GM12878 (cell line): ENCODE measurements at regions of chr2 and their contacts with region 1.

Region 1: DNA sequence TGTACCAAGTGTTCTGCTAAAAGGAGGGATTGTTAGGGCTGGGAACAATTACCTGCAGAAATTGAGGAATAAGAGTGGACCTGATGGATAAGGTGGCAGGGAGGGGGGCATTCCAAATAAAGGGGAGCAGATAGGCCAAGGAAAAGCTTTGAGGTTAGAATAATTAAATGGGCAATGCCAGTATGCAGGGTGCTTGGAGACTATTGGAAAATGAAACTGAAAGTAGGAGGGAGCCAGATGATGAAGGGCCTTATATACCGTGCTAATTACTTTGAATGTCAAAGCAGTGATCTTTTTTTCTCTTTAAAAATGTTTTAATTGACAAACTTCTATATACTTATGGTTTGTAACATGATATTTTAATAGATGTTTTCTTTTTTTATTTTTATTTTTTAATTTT is 42.9 kb downstream of the MMADHC start:
- DNase-seq: no peak
- ATAC-seq: no peak
- H3K4me3 ChIP-seq: no peak overlapping the region
- H3K27ac ChIP-seq: no peak overlapping the region
- H3K4me1 ChIP-seq: no peaks in the 10 kb centered on the region
- H3K27me3 ChIP-seq: no peaks in the 10 kb centered on the region; a peak in 1 of 4 replicates
- CTCF ChIP-seq: no peak
- EP300 ChIP-seq: no peak
- POLR2A ChIP-seq: no peak
- RAD21 ChIP-seq: no peak

Region 2: DNA sequence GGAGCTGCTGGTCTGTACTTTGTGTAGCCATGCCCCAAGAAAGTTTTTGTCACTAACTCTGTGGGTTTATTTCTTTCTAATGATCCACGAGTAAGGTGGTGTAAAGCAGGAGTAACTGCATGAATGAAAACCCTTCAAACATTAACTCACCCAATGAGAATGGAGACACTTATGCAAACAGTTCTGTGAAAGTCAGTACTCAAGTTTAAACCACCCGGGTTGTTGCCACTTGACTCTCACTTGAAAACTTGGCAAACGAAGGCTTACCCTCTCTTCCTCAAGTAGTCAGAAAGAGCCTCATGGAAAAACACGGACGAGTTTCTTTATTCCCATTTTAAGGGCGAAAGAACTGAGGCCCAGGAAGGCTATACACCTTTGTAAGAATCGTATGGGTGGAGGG is 74.6 kb before region 1 on chr2:
- CTCF ChIA-PET with region 1: no interaction called
- POLR2A ChIA-PET with region 1: no interaction called
- RAD21 ChIA-PET with region 1: no interaction called
- SMC1A ChIA-PET with region 1: no interaction called
- in situ Hi-C with region 1: no loop called
- intact Hi-C with region 1: no loop called
- DNase-seq: no peak
- ATAC-seq: no peak
- H3K4me3 ChIP-seq: no peak overlapping the region
- H3K27ac ChIP-seq: no peak overlapping the region
- H3K4me1 ChIP-seq: no peaks in the 10 kb centered on the region
- H3K27me3 ChIP-seq: no peaks in the 10 kb centered on the region
- CTCF ChIP-seq: no peak
- EP300 ChIP-seq: no peak
- POLR2A ChIP-seq: no peak
- RAD21 ChIP-seq: no peak

Region 3: GRCh38 chr2:149490296-149490695 is 54.4 kb before region 1 on chr2:
- CTCF ChIA-PET with region 1: no interaction called
- POLR2A ChIA-PET with region 1: interaction called, 11 read pairs
- RAD21 ChIA-PET with region 1: no interaction called
- SMC1A ChIA-PET with region 1: no interaction called
- in situ Hi-C with region 1: no loop called
- intact Hi-C with region 1: no loop called
- DNase-seq: no peak
- ATAC-seq: no peak
- H3K4me3 ChIP-seq: no peak overlapping the region
- H3K27ac ChIP-seq: no peak overlapping the region
- H3K4me1 ChIP-seq: no peaks in the 10 kb centered on the region
- H3K27me3 ChIP-seq: peaks cover 0 to 4% of the 10 kb centered on the region in 2 experiments; a peak in 1 of 4 replicates
- CTCF ChIP-seq: no peak
- EP300 ChIP-seq: no peak
- POLR2A ChIP-seq: no peak
- RAD21 ChIP-seq: no peak

Region 4: GRCh38 chr2:149572102-149572953 is 27.6 kb after region 1 on chr2:
- CTCF ChIA-PET with region 1: no interaction called
- POLR2A ChIA-PET with region 1: no interaction called
- RAD21 ChIA-PET with region 1: no interaction called
- SMC1A ChIA-PET with region 1: no interaction called
- in situ Hi-C with region 1: no loop called
- intact Hi-C with region 1: no loop called
- DNase-seq: no peak
- ATAC-seq: no peak; the same call in 2 of the 3 replicates
- H3K4me3 ChIP-seq: no peak overlapping the region
- H3K27ac ChIP-seq: no peak overlapping the region
- H3K4me1 ChIP-seq: no peaks in the 10 kb centered on the region
- H3K27me3 ChIP-seq: no peaks in the 10 kb centered on the region
- CTCF ChIP-seq: no peak
- EP300 ChIP-seq: no peak
- POLR2A ChIP-seq: no peak
- RAD21 ChIP-seq: no peak

Region 5: GRCh38 chr2:149860276-149860921 is 315.7 kb after region 1 on chr2:
- CTCF ChIA-PET with region 1: no interaction called
- POLR2A ChIA-PET with region 1: no interaction called
- RAD21 ChIA-PET with region 1: no interaction called
- SMC1A ChIA-PET with region 1: no interaction called
- in situ Hi-C with region 1: no loop called
- intact Hi-C with region 1: no loop called
- DNase-seq: no peak
- ATAC-seq: no peak
- H3K4me3 ChIP-seq: no peak overlapping the region
- H3K27ac ChIP-seq: no peak overlapping the region
- H3K4me1 ChIP-seq: no peaks in the 10 kb centered on the region
- H3K27me3 ChIP-seq: no peaks in the 10 kb centered on the region
- CTCF ChIP-seq: no peak
- EP300 ChIP-seq: no peak
- POLR2A ChIP-seq: no peak
- RAD21 ChIP-seq: no peak